GM13977 (cell line): ENCODE measurements at regions of chr6 and their contacts with region 1.

Region 1: DNA sequence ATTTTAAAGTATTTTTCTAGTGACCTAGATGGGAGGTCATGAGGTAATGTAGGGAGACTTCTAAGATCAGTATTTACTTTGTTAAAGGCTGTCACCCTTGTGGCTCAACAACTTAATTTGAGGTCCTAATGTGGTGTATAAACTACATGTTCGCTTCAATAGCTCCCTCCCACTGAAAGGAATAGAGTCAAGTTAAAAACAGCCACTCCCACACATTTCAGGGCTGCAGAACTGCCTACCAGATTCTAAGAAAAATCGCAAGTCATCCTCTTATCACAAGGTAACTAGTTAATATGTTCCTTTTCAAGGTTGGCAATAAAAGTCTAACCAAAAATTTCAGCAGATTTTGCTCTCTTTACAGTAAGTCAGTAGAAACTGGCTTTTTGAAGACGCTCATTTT is 15.1 kb downstream of the GSTA1 start:
- DNase-seq: no peak
- CTCF ChIP-seq: no peak

Region 2: DNA sequence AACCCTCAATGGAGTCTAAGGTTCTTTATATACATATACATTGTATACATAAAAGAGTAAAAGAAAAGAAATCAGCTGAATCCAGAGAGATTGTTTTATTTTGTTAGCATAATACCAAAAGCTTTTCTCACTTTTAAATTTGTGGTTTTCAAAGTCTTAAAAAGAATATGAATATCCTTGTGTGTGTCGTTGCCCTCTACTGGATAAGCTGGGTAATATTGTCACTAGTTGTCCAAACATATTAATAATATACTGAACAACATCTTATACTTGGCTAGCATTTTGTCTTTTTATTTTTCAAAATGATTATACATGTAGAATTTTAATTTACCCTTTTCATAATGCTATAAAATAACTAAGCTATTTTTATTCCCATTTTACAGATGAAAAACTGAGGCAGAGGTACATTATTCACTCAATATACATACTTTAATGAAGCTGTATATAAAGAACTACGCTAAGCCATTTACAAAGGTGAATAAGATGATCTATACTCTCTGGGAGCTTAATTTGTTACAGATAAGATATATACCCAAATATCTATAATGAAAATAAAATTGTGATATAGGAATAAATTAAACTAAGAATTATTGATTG is 1438.1 kb before region 1 on chr6:
- in situ Hi-C with region 1: no loop called
- DNase-seq: peak; percentile 5
- CTCF ChIP-seq: peak; percentile 45

Region 3: DNA sequence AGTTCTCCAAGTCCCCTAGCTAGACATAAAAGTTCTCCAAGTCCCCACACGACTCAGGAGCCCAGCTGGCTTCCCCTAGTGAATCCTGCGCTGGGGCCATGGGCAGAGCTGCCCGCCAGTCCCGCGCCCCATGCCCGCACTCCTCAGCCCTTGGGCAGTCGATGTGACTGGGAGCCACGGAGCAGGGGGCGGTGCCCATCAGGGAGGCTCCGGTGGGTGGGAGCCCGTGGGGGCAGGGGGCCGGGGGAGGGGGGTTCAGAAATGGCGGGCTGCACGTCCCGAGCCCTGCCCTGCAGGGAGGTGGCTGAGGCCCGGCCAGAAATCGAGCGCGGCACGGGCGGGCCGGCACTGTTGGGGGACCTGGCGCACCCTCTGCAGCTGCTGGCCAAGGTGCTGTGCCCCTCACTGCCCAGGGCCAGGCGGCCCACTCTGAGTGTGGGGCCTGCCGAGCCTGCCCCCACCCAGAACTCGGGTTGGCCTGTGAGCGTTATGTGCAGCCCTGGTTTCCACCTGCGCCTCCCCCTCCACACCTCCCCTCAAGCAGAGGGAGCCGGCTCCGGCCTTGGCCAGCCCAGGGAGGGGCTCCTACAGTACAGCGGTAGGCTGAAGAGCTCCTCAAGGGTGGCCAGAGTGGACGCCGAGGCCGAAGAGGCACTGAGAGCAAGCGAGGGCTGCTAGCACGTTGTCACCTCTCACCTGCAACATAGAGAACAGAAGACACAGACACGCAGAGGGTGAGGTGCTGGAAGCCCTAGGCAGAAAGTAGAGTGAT is 40.8 kb after region 1 on chr6:
- in situ Hi-C with region 1: loop called (anchors 5 kb)
- DNase-seq: no peak
- CTCF ChIP-seq: no peak